ENCODE measurements at regions of chr17 and their contacts with region 1.

Region 1: DNA sequence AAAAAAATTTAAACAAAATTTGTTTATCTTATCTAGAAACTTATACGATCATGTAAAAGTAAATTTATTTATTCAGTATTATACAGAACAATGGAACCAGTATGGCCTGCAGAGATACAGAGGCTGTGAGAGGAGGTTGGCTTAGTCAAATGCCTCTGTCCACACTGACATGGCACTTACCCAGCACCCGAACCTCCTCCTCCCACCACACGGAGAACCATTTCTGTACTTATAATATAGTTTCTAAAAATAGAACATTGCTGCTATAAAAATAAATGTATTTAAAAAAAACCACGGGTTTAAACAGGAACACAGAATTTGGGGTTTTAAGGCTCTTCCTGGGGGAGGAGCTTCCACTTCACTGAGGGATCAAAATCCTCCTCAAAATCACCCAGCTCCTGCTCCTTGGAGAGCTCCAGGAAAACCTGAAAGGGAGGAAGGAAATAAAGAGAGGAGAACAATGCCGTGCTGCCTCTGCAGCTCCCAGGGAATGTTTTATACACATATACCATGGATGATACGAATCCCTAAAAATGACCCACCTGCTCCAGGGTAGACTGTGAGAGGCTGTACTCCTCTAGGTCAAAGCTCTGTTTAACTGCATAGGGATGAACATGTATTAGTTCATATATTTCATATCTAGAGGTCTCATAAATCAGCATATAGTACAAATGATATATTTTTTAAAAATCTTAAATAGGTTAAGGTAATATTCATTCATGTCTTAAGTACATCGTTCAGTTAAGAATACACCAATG is 87.3 kb downstream of the ABCA8 start:
- DNase-seq: no peak

Region 2: DNA sequence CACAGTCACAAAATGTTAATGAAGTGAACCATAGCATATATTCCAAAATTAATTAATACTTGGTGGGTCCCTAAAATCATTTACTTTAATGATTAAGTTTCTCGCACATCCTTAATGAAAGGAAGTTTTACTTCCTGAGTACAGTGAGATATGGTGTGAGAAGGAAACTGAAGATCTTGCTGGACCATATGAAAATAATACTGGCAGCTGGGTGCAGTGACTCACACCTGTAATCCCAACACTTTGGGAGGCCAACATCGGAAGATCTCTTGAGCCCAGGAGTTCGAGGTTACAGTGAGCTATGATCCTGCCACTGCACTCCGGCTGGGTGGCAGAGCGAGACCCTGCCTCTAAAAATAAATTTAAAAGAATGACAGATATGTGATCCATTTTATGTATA is 24.7 kb after region 1 on chr17:
- intact Hi-C with region 1: loop called (anchors 2 kb)
- DNase-seq: no peak

Measured in posterior cingulate gyrus (tissue), 11 donors.